CD4-positive, alpha-beta T cell (primary cell): ENCODE measurements at regions of chr13 and their contacts with region 1.

Region 1: GRCh38 chr13:43596924-43597598 is 189.7 kb downstream of the ENOX1 start:
- DNase-seq: no peak
- ATAC-seq: no peak
- H3K4me3 ChIP-seq: no peak overlapping the region
- H3K4me3 Mint-ChIP-seq: no peak overlapping the region
- H3K27ac ChIP-seq: no peak overlapping the region
- H3K27ac Mint-ChIP-seq: no peak overlapping the region
- H3K4me1 ChIP-seq: no peaks in the 10 kb centered on the region
- H3K4me1 Mint-ChIP-seq: peaks cover 13% of the 10 kb centered on the region
- H3K27me3 ChIP-seq: no peaks in the 10 kb centered on the region
- H3K27me3 Mint-ChIP-seq: no peaks in the 10 kb centered on the region
- CTCF ChIP-seq: no peak

Region 2: DNA sequence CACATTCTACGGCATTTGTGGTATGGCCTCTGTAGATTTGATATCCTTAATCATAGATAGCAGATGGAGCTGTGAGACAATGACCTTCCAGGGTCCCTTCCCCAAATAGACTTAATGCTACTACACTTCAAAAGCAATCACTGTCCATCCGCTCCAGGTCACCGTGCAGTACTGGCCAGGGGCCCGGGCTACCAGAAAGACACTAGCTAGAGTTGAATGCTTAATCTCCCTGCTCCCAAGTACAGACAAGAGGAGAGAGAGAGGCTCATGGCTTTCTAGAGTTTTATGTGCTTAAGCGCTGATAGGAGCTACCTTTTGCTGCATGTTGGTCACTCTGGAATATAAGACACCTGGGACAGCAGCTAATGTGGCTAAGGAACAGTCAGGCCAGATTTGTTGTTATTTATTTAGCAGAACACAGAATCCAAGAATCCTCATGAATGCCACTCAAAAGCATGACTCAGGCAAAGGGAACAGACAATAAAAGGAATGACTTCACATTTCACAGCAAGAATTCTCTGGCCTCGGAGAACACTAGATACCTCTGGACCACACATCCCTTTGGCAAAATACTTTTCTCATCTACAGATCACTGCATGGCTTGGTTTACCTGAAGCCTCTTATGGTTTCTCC is 447.6 kb after region 1 on chr13:
- CTCF ChIA-PET with region 1: no interaction called
- POLR2A ChIA-PET with region 1: no interaction called
- intact Hi-C with region 1: loop called in 1 of 2 experiments (anchors 5 kb)
- DNase-seq: no peak
- ATAC-seq: no peak
- H3K4me3 ChIP-seq: no peak overlapping the region
- H3K4me3 Mint-ChIP-seq: no peak overlapping the region
- H3K27ac ChIP-seq: no peak overlapping the region
- H3K27ac Mint-ChIP-seq: no peak overlapping the region
- H3K4me1 ChIP-seq: no peaks in the 10 kb centered on the region
- H3K4me1 Mint-ChIP-seq: no peaks in the 10 kb centered on the region
- H3K27me3 ChIP-seq: peaks cover 8 to 17% of the 10 kb centered on the region in 2 experiments
- H3K27me3 Mint-ChIP-seq: peaks cover 29% of the 10 kb centered on the region
- CTCF ChIP-seq: no peak